HEK293T (cell line): ENCODE measurements at regions of chr9 and their contacts with region 1.

Region 1: DNA sequence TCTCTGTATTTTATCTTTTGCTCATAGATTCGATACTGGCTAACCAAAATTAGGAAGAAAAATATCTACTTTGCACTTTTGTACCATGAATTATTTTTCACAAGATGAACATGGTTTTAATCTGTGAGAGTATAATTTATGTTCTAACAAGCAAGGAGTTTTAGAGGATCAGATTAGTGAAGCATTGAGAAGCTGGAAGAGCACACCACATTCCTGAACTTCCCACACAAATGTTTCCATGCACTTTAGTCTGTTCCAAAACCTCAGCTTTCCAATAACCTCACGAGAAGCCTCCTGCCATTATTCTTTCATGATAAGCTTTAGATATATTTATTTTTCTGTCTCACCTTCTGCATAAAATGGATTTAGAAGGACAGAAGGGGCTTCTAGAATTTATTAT is 98.7 kb upstream of the MPDZ start:
- DNase-seq: no peak

Region 2: DNA sequence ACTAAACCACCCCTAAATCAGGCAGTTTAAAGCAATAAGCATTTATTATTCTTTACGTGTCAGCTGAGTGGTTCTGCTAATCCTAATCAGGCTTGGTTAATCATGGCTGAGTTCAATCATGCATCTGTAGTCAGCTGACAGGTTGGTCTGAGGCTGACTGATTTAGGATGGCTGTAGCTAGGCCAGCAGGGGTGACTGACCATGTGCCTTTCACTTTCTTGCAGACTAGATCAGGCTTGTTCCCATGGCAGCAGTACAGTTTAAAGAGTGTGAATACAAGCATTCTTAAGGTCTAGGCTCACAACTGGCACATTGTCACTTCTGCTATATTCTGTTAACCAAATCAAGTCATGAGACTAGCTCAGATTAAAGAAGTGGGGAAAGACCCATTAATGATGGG is 82.6 kb before region 1 on chr9:
- CTCF ChIA-PET with region 1: no interaction called
- POLR2A ChIA-PET with region 1: no interaction called
- DNase-seq: no peak

Region 3: GRCh38 chr9:13397220-13397619 is 19.1 kb after region 1 on chr9:
- CTCF ChIA-PET with region 1: interaction called, 10 read pairs
- POLR2A ChIA-PET with region 1: no interaction called
- DNase-seq: no peak